Heart right ventricle (tissue), 16 donors: ENCODE measurements at regions of chr6 and their contacts with region 1.

Region 1: DNA sequence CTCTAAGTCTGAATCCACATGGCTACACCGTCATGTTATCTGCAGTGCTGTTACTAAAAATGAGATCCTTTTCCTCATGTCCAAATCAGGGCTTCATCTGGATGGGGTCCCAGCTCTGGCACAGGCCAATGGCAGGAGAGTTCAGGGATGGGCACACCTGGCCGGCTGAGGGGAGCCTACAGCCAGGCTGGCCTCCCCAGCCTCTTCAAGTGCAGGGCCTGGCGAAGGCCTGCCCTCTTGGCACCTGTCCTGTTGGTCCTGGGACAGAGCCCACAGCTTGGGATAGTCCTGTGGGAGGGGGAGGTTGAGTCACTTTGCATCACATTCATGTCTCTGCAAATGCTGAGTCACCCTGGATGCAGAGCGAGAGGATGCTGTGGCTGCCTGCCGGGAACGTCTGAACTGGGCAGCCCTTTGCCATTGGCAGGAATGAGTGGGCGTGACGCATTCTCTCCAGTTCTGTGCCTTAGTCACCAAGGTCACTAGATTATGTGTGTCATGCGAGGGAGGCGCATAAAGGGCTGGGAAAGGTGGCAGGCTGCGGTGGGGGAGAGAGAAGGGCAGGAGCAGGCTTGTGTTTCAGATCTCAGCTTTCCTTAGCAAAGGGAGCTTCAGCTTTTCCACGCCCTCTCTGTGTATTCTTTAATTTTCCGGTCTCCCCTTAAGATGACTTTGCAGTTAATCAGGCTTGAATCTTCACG is 223.2 kb upstream of the ECI2 start:
- DNase-seq: peak; percentile 86 to 91
- ATAC-seq: peak; percentile 89 to 98 (median 94)
- H3K4me3 ChIP-seq: peak overlapping the region in 2 of 10 donors; percentile 5 to 15
- H3K27ac ChIP-seq: peak overlapping the region; percentile 66 to 96 (median 90)
- H3K4me1 ChIP-seq: peaks cover 2 to 16% (median 13%) of the 10 kb centered on the region in 9 donors
- H3K27me3 ChIP-seq: no peaks in the 10 kb centered on the region
- CTCF ChIP-seq: no peak

Region 2: DNA sequence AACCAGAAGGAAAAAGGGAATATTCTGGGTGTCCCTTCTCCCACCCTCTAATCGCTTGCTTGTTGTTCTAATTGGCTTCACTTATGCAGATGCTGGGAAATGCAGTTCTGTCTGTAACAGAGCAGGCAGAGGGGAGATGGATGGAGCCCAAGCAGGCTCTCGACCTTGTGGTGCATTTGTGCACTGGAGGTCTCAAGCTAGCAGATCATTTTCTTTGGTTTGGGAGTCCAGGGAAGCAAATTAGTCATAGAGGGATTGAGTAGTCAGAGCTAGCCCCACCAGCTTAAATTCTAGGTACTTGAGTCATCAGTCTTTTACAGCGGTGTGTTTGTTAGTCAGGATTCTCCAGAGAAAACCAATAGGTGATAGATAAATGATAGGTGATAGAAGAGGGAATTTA is 11.5 kb after region 1 on chr6:
- intact Hi-C with region 1: loop called in 1 of 10 experiments (anchors 1 kb)
- DNase-seq: no peak
- ATAC-seq: no peak
- H3K4me3 ChIP-seq: no peak overlapping the region
- H3K27ac ChIP-seq: peak overlapping the region in 9 of 10 donors; percentile 22 to 88 (median 79)
- H3K4me1 ChIP-seq: peaks cover 5 to 49% (median 32%) of the 10 kb centered on the region in 9 donors
- H3K27me3 ChIP-seq: no peaks in the 10 kb centered on the region
- CTCF ChIP-seq: no peak

Region 3: DNA sequence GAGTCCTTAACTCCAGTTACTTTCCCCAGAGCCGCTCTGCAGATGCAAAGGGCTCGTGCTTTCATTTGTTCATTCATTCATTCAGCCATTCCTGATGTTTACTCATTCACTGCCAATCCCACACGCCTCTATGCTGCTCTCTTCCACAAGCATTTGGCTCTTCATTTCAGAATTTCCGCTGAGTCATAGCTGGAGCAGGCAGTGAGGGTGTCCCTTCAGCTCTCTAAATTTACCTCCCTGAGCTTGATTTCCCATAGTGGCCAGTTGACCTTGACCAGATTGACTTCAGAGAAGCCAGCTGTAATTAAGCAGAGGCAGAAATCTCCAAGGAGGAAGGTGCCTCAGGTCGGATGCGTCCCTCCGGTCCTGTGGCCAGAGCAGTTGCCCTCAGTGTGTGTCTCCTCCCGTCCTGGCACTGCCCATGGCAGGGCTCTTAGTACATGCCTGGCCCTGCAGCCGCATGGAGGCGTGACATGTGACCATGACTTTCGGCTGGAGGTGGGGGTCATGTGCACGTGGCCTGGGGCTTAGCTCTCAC is 43.9 kb after region 1 on chr6:
- intact Hi-C with region 1: loop called in 2 of 10 experiments (anchors 2 to 5 kb)
- DNase-seq: peak in 1 of 2 donors; percentile 71
- ATAC-seq: peak; percentile 74 to 94 (median 90)
- H3K4me3 ChIP-seq: no peak overlapping the region
- H3K27ac ChIP-seq: peak overlapping the region; percentile 37 to 90 (median 82)
- H3K4me1 ChIP-seq: peaks cover 4 to 32% (median 28%) of the 10 kb centered on the region in 9 donors
- H3K27me3 ChIP-seq: no peaks in the 10 kb centered on the region
- CTCF ChIP-seq: no peak

Region 4: GRCh38 chr6:4460586-4461475 is 102.3 kb after region 1 on chr6:
- intact Hi-C with region 1: loop called in 2 of 10 experiments (anchors 5 to 10 kb)
- DNase-seq: peak; percentile 39 to 67
- ATAC-seq: peak; percentile 82 to 95 (median 92)
- H3K4me3 ChIP-seq: peak overlapping the region in 2 of 10 donors; percentile 9 to 14
- H3K27ac ChIP-seq: peak overlapping the region; percentile 33 to 77 (median 67)
- H3K4me1 ChIP-seq: peaks cover 5 to 23% (median 19%) of the 10 kb centered on the region in 9 donors
- H3K27me3 ChIP-seq: no peaks in the 10 kb centered on the region
- CTCF ChIP-seq: no peak

Region 5: GRCh38 chr6:4606821-4607704 is 248.5 kb after region 1 on chr6:
- intact Hi-C with region 1: loop called in 2 of 10 experiments (anchors 5 to 10 kb)
- DNase-seq: peak in 1 of 2 donors; percentile 29
- ATAC-seq: peak in 3 of 8 donors; percentile 12 to 59 (median 22)
- H3K4me3 ChIP-seq: no peak overlapping the region
- H3K27ac ChIP-seq: no peak overlapping the region
- H3K4me1 ChIP-seq: peaks cover 0 to 42% (median 23%) of the 10 kb centered on the region in 9 donors
- H3K27me3 ChIP-seq: no peaks in the 10 kb centered on the region
- CTCF ChIP-seq: no peak